Naive thymus-derived CD4-positive, alpha-beta T cell (primary cell): ENCODE measurements at regions of chr10 and their contacts with region 1.

Region 1: GRCh38 chr10:84715911-84716310 is 387.5 kb downstream of the CCSER2 start:
- DNase-seq: no peak
- ATAC-seq: no peak
- H3K4me3 ChIP-seq: no peak overlapping the region
- H3K4me3 Mint-ChIP-seq: no peak overlapping the region
- H3K27ac ChIP-seq: no peak overlapping the region
- H3K27ac Mint-ChIP-seq: no peak overlapping the region
- H3K4me1 ChIP-seq: no peaks in the 10 kb centered on the region
- H3K4me1 Mint-ChIP-seq: no peaks in the 10 kb centered on the region
- H3K27me3 ChIP-seq: no peaks in the 10 kb centered on the region
- H3K27me3 Mint-ChIP-seq: peaks cover 4 to 32% (median 11%) of the 10 kb centered on the region in 5 donors

Region 2: GRCh38 chr10:84264611-84265141 is 451.2 kb before region 1 on chr10:
- CTCF ChIA-PET with region 1: no interaction called
- POLR2A ChIA-PET with region 1: no interaction called
- intact Hi-C with region 1: loop called in 1 of 2 experiments (anchors 2 kb)
- DNase-seq: peak; percentile 37 to 74 (median 61)
- ATAC-seq: peak; percentile 94
- H3K4me3 ChIP-seq: no peak overlapping the region
- H3K4me3 Mint-ChIP-seq: no peak overlapping the region
- H3K27ac ChIP-seq: no peak overlapping the region
- H3K27ac Mint-ChIP-seq: no peak overlapping the region
- H3K4me1 ChIP-seq: peaks cover 0 to 3% of the 10 kb centered on the region in 2 donors
- H3K4me1 Mint-ChIP-seq: peaks cover 0 to 16% (median 7%) of the 10 kb centered on the region in 7 donors
- H3K27me3 ChIP-seq: no peaks in the 10 kb centered on the region
- H3K27me3 Mint-ChIP-seq: peaks cover 12 to 36% (median 25%) of the 10 kb centered on the region in 5 donors

Region 3: DNA sequence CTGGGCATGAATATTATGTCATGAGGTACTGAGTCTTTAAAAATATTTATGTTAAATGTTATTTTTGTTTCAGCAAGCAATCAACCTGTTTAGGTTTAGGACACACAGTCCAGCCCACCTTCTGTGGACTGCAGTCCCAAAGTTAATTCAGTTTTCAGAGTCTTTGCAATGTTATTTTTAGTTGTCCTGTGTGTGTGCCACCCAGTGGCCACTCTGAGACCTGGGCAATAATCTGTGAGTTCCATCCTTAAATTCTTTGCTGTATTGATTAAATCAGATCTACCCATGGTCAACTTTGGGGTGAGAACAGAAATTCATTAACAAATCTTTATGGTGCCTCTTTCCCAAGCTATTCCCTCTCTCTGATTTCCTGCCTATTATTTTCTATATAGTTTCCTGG is 27.6 kb after region 1 on chr10:
- CTCF ChIA-PET with region 1: no interaction called
- POLR2A ChIA-PET with region 1: no interaction called
- intact Hi-C with region 1: no loop called
- DNase-seq: no peak
- ATAC-seq: no peak
- H3K4me3 ChIP-seq: no peak overlapping the region
- H3K4me3 Mint-ChIP-seq: no peak overlapping the region
- H3K27ac ChIP-seq: no peak overlapping the region
- H3K27ac Mint-ChIP-seq: no peak overlapping the region
- H3K4me1 ChIP-seq: no peaks in the 10 kb centered on the region
- H3K4me1 Mint-ChIP-seq: no peaks in the 10 kb centered on the region
- H3K27me3 ChIP-seq: no peaks in the 10 kb centered on the region
- H3K27me3 Mint-ChIP-seq: peaks cover 0 to 21% (median 7%) of the 10 kb centered on the region in 5 donors